Mammary epithelial cell (primary cell): ENCODE measurements at regions of chr17 and their contacts with region 1.

Region 1: GRCh38 chr17:56653877-56654276 is 60.4 kb downstream of the NOG start:
- DNase-seq: peak; percentile 75
- H3K4me3 ChIP-seq: no peak overlapping the region
- H3K27ac ChIP-seq: no peak overlapping the region
- H3K4me1 ChIP-seq: peaks cover 1% of the 10 kb centered on the region
- H3K27me3 ChIP-seq: no peaks in the 10 kb centered on the region
- CTCF ChIP-seq: peak; percentile 74 to 77

Region 2: GRCh38 chr17:56779898-56780733 is 126.2 kb after region 1 on chr17:
- CTCF ChIA-PET with region 1: no interaction called
- dilution Hi-C with region 1: no loop called
- in situ Hi-C with region 1: no loop called
- intact Hi-C with region 1: loop called (anchors 1 kb)
- DNase-seq: peak; percentile 78
- H3K4me3 ChIP-seq: peak overlapping the region in 2 of 3 experiments; percentile 32 to 35
- H3K27ac ChIP-seq: no peak overlapping the region
- H3K4me1 ChIP-seq: peaks cover 20% of the 10 kb centered on the region
- H3K27me3 ChIP-seq: no peaks in the 10 kb centered on the region
- CTCF ChIP-seq: peak; percentile 78 to 96